H1 (cell line): ENCODE measurements at regions of chr6 and their contacts with region 1.

Region 1: DNA sequence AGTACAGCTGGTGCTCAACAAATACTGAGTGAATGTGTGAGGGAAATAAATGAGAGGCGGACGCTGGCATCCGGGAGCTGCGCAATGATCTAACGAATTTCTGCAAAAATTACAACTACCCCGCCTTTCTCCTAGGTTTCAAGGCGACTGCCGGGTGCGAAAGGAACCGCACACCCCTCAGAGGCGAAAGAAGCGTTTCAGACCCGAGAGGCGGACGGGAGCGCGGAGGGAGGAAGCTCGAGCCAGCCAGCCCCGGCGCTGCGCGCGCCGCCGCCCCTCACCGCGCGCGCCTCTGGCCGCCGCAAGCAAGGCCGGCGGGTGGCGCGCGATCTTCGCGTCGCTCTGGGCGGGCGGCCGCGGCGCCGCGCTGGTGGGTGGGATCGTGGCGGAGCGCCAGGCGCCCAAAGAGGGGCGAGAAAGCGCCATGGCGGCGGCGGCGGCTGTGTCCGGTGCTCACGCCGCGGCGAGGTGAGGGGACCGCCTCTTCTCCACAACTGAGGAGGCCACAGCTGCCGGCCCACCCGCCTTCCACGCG is at the start of gene BLTP3A:
- DNase-seq: peak; percentile 17 to 75
- H3K4me3 ChIP-seq: peak within 1 kb of the TSS; percentile 81 to 87 (median 84)
- H3K27ac ChIP-seq: peak within 1 kb of the TSS; percentile 35; the same call in 1 of the 2 replicates
- H3K4me1 ChIP-seq: peaks cover 0 to 2% (median under 1%) of the 10 kb centered on the region in 4 experiments; a peak in 2 of 7 replicates
- H3K27me3 ChIP-seq: no peaks in the 10 kb centered on the region
- CTCF ChIP-seq: no peak
- EP300 ChIP-seq: no peak
- POLR2A ChIP-seq: peak; percentile 63 to 78
- RAD21 ChIP-seq: no peak; a peak in 1 of 4 replicates
- total RNA-seq, gene BLTP3A: 17.2 and 18.5 TPM in 2 replicates

Region 2: DNA sequence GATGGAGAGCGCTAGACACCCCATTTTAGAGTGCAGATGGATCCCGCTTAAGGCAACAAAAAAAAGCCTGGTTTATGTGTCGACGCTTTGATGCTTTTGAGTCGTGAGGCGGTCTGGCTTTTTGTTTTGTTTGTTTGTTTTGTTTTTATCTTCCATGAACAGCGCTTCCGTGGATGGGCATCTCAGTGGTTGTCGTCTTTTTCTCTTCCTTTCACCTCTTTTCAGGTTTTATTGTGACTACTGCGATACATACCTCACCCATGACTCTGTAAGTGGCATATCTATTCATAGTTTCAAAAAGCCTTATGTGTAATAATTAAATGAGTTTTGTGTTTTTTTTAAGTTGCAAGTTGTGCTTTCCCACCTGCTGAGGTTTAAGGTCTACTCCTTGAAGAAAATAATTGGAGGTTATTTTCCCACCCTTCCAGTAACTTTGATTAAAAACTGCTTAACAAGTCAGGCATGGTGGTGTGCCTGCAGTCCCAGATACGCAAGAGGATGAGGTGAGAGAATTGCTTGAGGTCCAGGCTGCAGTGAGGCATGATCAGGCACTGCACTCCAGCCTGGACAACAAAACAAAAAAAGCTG is 34.0 kb before region 1 on chr6:
- CTCF ChIA-PET with region 1: interaction called, 3 read pairs
- POLR2A ChIA-PET with region 1: interaction called, 24 read pairs
- DNase-seq: no peak
- H3K4me3 ChIP-seq: peak overlapping the region; percentile 81 to 98 (median 95)
- H3K27ac ChIP-seq: peak overlapping the region; percentile 92
- H3K4me1 ChIP-seq: no peaks in the 10 kb centered on the region
- H3K27me3 ChIP-seq: no peaks in the 10 kb centered on the region
- CTCF ChIP-seq: no peak
- EP300 ChIP-seq: no peak
- POLR2A ChIP-seq: no peak; a peak in 1 of 3 replicates
- RAD21 ChIP-seq: no peak

Region 3: GRCh38 chr6:34771727-34772126 is 20.0 kb before region 1 on chr6:
- CTCF ChIA-PET with region 1: no interaction called
- POLR2A ChIA-PET with region 1: interaction called, 31 read pairs
- DNase-seq: peak in 1 of 2 experiments; percentile 5
- H3K4me3 ChIP-seq: no peak overlapping the region
- H3K27ac ChIP-seq: no peak overlapping the region
- H3K4me1 ChIP-seq: no peaks in the 10 kb centered on the region
- H3K27me3 ChIP-seq: no peaks in the 10 kb centered on the region
- CTCF ChIP-seq: no peak
- EP300 ChIP-seq: no peak
- POLR2A ChIP-seq: no peak
- RAD21 ChIP-seq: no peak

Region 4: DNA sequence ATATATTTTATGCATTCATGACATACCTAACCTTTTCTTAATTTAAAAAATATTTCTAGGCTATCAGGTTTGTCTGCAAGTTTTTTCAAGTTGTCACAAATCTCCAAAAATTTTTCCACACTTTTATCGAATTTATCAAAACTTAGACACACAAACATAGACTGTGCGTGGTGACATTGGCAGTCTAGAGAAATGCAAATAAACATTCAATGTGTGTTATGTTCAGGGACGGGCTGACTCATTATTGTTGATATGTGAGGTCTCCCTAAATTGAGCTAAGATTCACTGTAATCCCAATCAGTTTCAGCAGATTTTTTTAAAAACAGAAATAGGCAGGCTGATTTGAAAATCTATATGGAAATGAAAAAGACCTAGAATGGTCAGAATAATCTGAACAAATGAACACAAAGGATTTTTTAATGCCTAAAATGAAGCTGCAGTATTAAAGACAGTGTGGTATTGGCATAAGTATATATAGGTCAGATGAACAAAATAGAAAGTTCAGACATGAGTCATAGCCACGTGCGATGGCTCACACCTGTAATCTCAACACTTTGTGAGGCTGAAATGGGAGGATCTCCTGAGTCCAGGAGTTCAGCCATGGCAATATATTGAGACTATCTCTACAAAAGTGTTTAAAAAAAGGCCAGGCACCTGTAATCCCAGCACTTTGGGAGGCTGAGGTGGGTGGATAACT is 19.3 kb after region 1 on chr6:
- CTCF ChIA-PET with region 1: interaction called, 3 read pairs
- POLR2A ChIA-PET with region 1: interaction called, 65 read pairs
- DNase-seq: no peak
- H3K4me3 ChIP-seq: no peak overlapping the region
- H3K27ac ChIP-seq: no peak overlapping the region
- H3K4me1 ChIP-seq: no peaks in the 10 kb centered on the region
- H3K27me3 ChIP-seq: no peaks in the 10 kb centered on the region
- CTCF ChIP-seq: no peak
- EP300 ChIP-seq: no peak
- POLR2A ChIP-seq: no peak
- RAD21 ChIP-seq: no peak